ENCODE measurements at regions of chr1 and their contacts with region 1.

Region 1: GRCh38 chr1:185595835-185596667 is 138.1 kb upstream of the HMCN1 start:
- DNase-seq: peak; percentile 64
- ATAC-seq: peak; percentile 82
- H3K4me3 Mint-ChIP-seq: no peak overlapping the region
- H3K27ac Mint-ChIP-seq: no peak overlapping the region
- H3K4me1 Mint-ChIP-seq: peaks cover 14% of the 10 kb centered on the region
- H3K27me3 Mint-ChIP-seq: no peaks in the 10 kb centered on the region
- CTCF ChIP-seq: peak; percentile 54

Region 2: GRCh38 chr1:185559684-185560331 is 36.2 kb before region 1 on chr1:
- CTCF ChIA-PET with region 1: interaction called, 16 read pairs
- POLR2A ChIA-PET with region 1: interaction called, 3 read pairs
- intact Hi-C with region 1: no loop called
- DNase-seq: peak; percentile 81
- ATAC-seq: peak; percentile 94
- H3K4me3 Mint-ChIP-seq: no peak overlapping the region
- H3K27ac Mint-ChIP-seq: peak overlapping the region; percentile 83
- H3K4me1 Mint-ChIP-seq: peaks cover 36% of the 10 kb centered on the region
- H3K27me3 Mint-ChIP-seq: no peaks in the 10 kb centered on the region
- CTCF ChIP-seq: peak; percentile 39

Region 3: DNA sequence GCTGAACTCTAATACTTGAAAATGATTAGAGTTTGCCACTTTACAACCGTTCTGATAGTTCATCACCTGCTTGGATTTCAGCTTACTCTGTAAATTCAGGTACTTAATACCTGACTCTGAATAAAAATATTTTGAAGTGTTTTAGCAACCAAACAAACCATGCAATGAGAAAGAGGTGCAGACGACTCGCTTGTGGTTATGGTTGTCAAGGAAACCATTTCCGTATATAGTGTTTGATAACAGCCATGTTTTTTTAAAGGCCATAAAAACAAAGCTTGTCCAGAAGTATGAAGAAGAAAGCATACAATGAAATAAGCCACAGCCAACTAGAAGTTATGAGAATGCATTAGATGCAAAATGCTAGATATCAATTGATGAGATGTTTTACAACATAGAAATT is 29.1 kb before region 1 on chr1:
- CTCF ChIA-PET with region 1: interaction called, 10 read pairs
- POLR2A ChIA-PET with region 1: no interaction called
- intact Hi-C with region 1: no loop called
- DNase-seq: peak; percentile 68
- ATAC-seq: peak; percentile 65
- H3K4me3 Mint-ChIP-seq: no peak overlapping the region
- H3K27ac Mint-ChIP-seq: peak overlapping the region; percentile 86
- H3K4me1 Mint-ChIP-seq: peaks cover 59% of the 10 kb centered on the region
- H3K27me3 Mint-ChIP-seq: no peaks in the 10 kb centered on the region
- CTCF ChIP-seq: no peak

Region 4: GRCh38 chr1:185585770-185586169 is 10.3 kb before region 1 on chr1:
- CTCF ChIA-PET with region 1: interaction called, 13 read pairs
- POLR2A ChIA-PET with region 1: no interaction called
- intact Hi-C with region 1: no loop called
- DNase-seq: no peak
- ATAC-seq: no peak
- H3K4me3 Mint-ChIP-seq: no peak overlapping the region
- H3K27ac Mint-ChIP-seq: no peak overlapping the region
- H3K4me1 Mint-ChIP-seq: no peaks in the 10 kb centered on the region
- H3K27me3 Mint-ChIP-seq: no peaks in the 10 kb centered on the region
- CTCF ChIP-seq: no peak